ENCODE measurements at regions of chr1 and their contacts with region 1.

Region 1: GRCh38 chr1:11645670-11646265 is 8.5 kb downstream of the FBXO2 start:
- DNase-seq: peak; percentile 25 to 64
- ATAC-seq: peak in 1 of 2 donors; percentile 44
- H3K4me3 ChIP-seq: no peak overlapping the region
- H3K27ac ChIP-seq: no peak overlapping the region
- H3K4me1 ChIP-seq: peaks cover 10 to 13% of the 10 kb centered on the region in 2 donors
- H3K27me3 ChIP-seq: peaks cover 13 to 24% (median 18%) of the 10 kb centered on the region in 3 donors
- CTCF ChIP-seq: peak; percentile 41 to 72 (median 60)
- POLR2A ChIP-seq: no peak

Region 2: GRCh38 chr1:11037740-11038182 is 608.0 kb before region 1 on chr1:
- in situ Hi-C with region 1: loop called (anchors 5 to 25 kb)
- intact Hi-C with region 1: loop called (anchors 1 kb)
- DNase-seq: peak; percentile 71 to 80
- ATAC-seq: peak; percentile 93
- H3K4me3 ChIP-seq: peak overlapping the region in 1 of 4 donors; percentile 31
- H3K27ac ChIP-seq: peak overlapping the region in 2 of 4 donors; percentile 30 to 56
- H3K4me1 ChIP-seq: peaks cover 8 to 10% of the 10 kb centered on the region in 2 donors
- H3K27me3 ChIP-seq: no peaks in the 10 kb centered on the region
- CTCF ChIP-seq: peak; percentile 86 to 98 (median 94)
- POLR2A ChIP-seq: no peak

Region 3: GRCh38 chr1:11248155-11248554 is 397.6 kb before region 1 on chr1:
- in situ Hi-C with region 1: loop called in 3 of 4 experiments (anchors 10 to 25 kb)
- intact Hi-C with region 1: no loop called
- DNase-seq: no peak
- ATAC-seq: no peak
- H3K4me3 ChIP-seq: no peak overlapping the region
- H3K27ac ChIP-seq: no peak overlapping the region
- H3K4me1 ChIP-seq: no peaks in the 10 kb centered on the region
- H3K27me3 ChIP-seq: no peaks in the 10 kb centered on the region
- CTCF ChIP-seq: no peak
- POLR2A ChIP-seq: no peak

Region 4: GRCh38 chr1:11337580-11338073 is 308.1 kb before region 1 on chr1:
- in situ Hi-C with region 1: loop called in 1 of 4 experiments (anchors 25 kb)
- intact Hi-C with region 1: loop called (anchors 5 kb)
- DNase-seq: peak in 1 of 2 donors; percentile 42
- ATAC-seq: no peak
- H3K4me3 ChIP-seq: no peak overlapping the region
- H3K27ac ChIP-seq: no peak overlapping the region
- H3K4me1 ChIP-seq: peaks cover 12 to 33% of the 10 kb centered on the region in 2 donors
- H3K27me3 ChIP-seq: no peaks in the 10 kb centered on the region
- CTCF ChIP-seq: peak; percentile 57 to 80 (median 67)
- POLR2A ChIP-seq: no peak

Region 5: DNA sequence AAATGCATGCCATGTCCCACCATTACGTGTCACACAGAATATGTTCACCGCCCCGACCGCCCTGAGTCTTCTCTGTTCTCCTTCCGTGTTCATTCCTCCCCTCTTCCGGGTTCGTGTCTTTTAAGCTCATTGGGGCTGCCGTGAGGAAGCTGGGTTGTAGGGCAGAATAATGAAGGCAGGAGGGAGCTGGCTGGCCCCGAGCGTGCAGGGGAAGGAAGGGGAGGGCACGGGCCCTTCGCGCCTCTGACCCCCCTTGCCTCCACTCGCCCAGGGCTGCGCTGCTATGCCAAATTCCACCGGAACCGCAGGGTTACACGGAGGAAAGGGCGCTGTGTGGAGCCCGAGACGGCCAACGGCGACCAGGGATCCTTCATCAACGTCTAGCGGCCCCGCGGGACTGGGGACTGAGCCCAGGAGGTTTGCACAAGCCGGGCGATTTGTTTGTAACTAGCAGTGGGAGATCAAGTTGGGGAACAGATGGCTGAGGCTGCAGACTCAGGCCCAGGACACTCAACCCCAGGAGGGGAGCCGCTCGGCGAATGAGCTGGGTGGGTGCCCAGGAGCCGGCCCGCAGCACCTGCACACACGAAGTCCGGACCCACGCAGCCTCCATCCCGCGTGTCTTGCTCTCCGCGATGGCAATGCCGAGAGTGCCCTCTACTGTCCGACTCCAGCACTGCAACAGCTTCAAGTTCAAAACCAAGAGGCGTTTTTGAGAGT is 73.7 kb after region 1 on chr1:
- in situ Hi-C with region 1: no loop called
- intact Hi-C with region 1: loop called (anchors 1 kb)
- DNase-seq: peak; percentile 47 to 67
- ATAC-seq: peak; percentile 65 to 69
- H3K4me3 ChIP-seq: peak overlapping the region; percentile 29 to 55 (median 50)
- H3K27ac ChIP-seq: no peak overlapping the region
- H3K4me1 ChIP-seq: peaks cover 0 to 8% of the 10 kb centered on the region in 2 donors
- H3K27me3 ChIP-seq: no peaks in the 10 kb centered on the region
- CTCF ChIP-seq: peak; percentile 73 to 96 (median 88)
- POLR2A ChIP-seq: no peak

Measured in gastrocnemius medialis (tissue), 4 donors.